ENCODE measurements at regions of chr9 and their contacts with region 1.

Region 1: DNA sequence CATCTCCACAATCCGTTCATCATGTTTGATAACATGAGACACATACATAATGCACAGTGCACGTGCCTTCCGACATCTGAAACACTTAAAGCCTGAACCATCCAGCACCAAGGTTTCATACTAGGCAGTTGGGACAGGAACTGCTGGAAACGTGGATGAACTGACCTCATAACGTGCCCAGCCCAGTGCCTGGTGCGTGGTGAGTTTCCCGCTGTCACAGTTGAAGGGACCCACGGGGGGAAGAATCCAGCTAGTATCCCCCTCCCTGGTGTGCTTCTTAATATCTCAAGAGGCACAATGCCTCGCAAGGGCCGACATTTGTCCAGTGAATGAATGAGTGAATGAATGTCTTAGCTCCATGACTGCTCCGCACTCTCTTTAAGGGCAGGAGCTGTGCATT is 23.2 kb downstream of the BARX1 start:
- DNase-seq: no peak
- ATAC-seq: no peak
- H3K4me3 ChIP-seq: no peak overlapping the region
- H3K4me3 Mint-ChIP-seq: no peak overlapping the region
- H3K27ac ChIP-seq: no peak overlapping the region
- H3K27ac Mint-ChIP-seq: no peak overlapping the region
- H3K4me1 ChIP-seq: no peaks in the 10 kb centered on the region
- H3K4me1 Mint-ChIP-seq: no peaks in the 10 kb centered on the region
- H3K27me3 ChIP-seq: peaks cover 12 to 17% of the 10 kb centered on the region in 2 experiments
- H3K27me3 Mint-ChIP-seq: peaks cover 30% of the 10 kb centered on the region
- CTCF ChIP-seq: no peak

Region 2: DNA sequence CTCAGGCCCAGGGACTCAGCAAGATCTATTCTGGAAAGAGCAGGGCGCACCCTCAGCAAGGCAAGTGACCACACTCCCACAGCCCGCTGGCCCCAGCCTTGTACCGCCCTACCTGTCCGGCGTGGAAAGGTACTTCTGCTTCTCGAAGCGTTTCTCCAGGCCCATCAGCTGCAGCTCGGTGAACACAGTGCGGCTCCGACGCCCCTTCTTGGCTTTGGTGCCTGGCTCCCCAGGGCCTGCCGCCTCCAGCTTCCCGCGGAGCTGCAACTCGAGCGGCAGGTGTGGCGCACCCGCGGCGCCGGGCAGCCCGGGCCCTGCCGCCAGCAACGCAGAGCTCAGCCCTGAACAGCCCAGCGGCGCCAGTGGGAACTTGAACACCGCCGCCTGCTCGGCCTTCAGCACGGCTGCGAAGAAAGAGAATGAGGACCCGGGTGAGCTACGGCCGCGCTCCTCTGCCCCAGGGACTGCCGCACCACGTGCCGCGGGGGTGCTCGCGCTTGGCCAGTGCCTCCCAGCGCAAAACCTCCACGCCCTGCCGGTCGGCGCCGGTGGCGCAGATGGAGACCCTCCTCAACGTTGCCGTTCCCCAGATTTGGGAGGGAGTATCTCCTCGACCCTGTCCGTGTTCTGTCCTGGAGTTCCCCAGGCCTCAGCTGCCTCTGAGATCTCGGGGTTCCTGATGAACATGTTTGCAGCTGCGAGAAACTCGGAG is 21.0 kb after region 1 on chr9:
- CTCF ChIA-PET with region 1: no interaction called
- POLR2A ChIA-PET with region 1: no interaction called
- intact Hi-C with region 1: loop called in 1 of 2 experiments (anchors 2 kb)
- DNase-seq: no peak
- ATAC-seq: no peak
- H3K4me3 ChIP-seq: no peak overlapping the region
- H3K4me3 Mint-ChIP-seq: peak overlapping the region; percentile 84
- H3K27ac ChIP-seq: no peak overlapping the region
- H3K27ac Mint-ChIP-seq: no peak overlapping the region
- H3K4me1 ChIP-seq: peaks cover 65% of the 10 kb centered on the region
- H3K4me1 Mint-ChIP-seq: peaks cover 45% of the 10 kb centered on the region
- H3K27me3 ChIP-seq: peaks cover 85 to 87% of the 10 kb centered on the region in 2 experiments
- H3K27me3 Mint-ChIP-seq: peaks cover 78% of the 10 kb centered on the region
- CTCF ChIP-seq: no peak

Region 3: GRCh38 chr9:94065535-94065961 is 133.6 kb after region 1 on chr9:
- CTCF ChIA-PET with region 1: no interaction called
- POLR2A ChIA-PET with region 1: no interaction called
- intact Hi-C with region 1: no loop called
- DNase-seq: peak; percentile 50 to 84 (median 68)
- ATAC-seq: peak; percentile 55
- H3K4me3 ChIP-seq: no peak overlapping the region
- H3K4me3 Mint-ChIP-seq: no peak overlapping the region
- H3K27ac ChIP-seq: no peak overlapping the region
- H3K27ac Mint-ChIP-seq: no peak overlapping the region
- H3K4me1 ChIP-seq: no peaks in the 10 kb centered on the region
- H3K4me1 Mint-ChIP-seq: no peaks in the 10 kb centered on the region
- H3K27me3 ChIP-seq: no peaks in the 10 kb centered on the region
- H3K27me3 Mint-ChIP-seq: no peaks in the 10 kb centered on the region
- CTCF ChIP-seq: peak; percentile 90

Measured in CD4-positive, alpha-beta T cell (primary cell).